ENCODE measurements at regions of chr15 and their contacts with region 1.

Region 1: DNA sequence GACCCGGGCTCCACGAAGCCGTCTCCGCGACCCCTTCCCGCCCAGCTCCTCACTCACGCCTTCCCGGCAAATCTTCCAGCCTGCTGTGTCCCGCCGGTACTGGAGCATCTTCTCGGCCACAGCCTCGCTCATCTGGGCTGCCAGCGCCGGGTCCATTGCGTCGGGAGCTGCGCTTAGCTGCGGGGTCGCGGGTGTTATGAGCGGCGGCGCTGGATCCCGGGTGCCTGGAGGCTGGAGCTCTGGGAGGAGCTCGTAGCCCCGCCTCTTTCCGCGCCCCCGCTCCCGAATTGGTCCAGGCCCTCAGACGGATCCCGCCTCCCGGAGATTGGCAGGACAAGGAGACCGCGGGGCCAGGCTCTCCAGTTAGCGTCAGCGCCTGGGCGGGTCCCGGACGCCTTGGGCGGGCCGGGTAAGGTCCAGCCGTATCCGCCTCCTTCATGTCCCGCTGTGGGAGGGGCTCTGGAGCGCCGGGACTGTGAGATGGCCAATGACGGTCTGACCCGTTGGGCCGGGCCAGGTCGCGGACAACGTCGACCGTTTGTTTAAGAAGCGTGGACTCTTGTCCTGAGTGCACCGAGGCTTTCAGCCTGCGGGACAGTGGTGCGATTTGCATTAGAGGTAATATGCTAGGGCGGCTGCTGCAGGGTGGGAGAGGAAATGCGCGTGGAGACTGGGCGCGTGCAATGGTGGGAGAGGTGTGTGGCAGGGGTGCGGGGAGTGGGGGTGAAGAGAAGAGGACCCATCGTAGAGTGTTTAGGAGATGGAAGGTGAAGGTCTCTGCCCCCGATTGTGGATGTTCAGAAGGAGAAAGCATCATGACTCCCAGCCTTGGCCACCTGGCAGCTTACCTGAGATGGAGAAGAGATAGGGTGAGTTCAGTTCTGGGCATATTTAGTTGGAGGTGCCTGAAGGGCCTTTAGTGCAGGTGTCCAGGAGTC is at the start of gene STARD5:
- DNase-seq: peak; percentile 97
- H3K4me3 ChIP-seq: peak within 1 kb of the TSS; percentile 97 to 99 (median 97)
- H3K27ac ChIP-seq: peak within 1 kb of the TSS; percentile 88
- H3K4me1 ChIP-seq: peaks cover 14% of the 10 kb centered on the region
- H3K27me3 ChIP-seq: no peaks in the 10 kb centered on the region
- CTCF ChIP-seq: no peak
- total RNA-seq, gene STARD5: 10.2 to 19.1 TPM

Region 2: DNA sequence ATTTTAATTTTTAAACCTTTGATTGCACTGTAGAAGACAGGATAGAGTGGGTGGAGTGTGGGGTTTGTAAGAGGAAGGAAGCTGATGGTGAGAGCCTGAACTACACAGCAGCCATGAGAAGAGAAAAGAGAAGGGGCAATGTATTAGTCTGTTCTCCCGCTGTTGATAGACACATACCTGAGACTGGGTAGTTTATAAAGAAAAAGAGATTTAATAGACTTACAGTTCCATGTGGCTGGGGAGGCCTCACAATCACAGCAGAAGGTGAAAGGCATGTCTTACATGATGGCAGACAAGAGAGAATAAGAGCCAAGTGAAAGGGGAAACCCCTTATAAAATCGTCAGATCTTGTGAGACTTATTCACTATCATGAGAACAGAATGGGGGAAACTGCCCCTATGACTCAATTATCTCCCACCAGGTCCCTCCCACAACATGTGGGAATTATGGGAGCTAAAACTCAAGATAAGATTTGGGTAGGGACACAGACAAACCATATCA is 37.5 kb before region 1 on chr15:
- CTCF ChIA-PET with region 1: no interaction called
- dilution Hi-C with region 1: no loop called
- in situ Hi-C with region 1: no loop called
- intact Hi-C with region 1: loop called (anchors 5 kb)
- DNase-seq: no peak
- H3K4me3 ChIP-seq: no peak overlapping the region
- H3K27ac ChIP-seq: no peak overlapping the region
- H3K4me1 ChIP-seq: no peaks in the 10 kb centered on the region
- H3K27me3 ChIP-seq: no peaks in the 10 kb centered on the region
- CTCF ChIP-seq: no peak

Region 3: DNA sequence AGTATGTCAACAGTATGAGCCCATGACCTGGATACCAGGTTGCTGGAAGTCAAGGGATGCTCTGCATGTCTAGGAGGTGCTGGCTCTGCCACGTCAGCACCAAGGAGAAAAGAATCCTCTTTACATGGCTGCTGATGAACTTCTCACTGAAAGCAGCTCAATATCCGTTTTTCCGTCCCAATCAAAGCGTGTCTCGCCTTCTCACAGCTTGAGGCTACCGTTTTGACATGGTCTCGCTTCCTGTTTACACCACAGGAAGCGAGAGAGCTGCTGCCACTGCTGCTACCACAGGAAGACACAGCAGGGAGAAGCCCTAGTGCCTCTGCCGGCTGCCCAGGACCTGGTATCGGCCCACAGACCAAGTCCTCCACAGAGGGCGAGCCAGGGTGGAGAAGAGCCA is 27.5 kb before region 1 on chr15:
- CTCF ChIA-PET with region 1: no interaction called
- dilution Hi-C with region 1: no loop called
- in situ Hi-C with region 1: no loop called
- intact Hi-C with region 1: loop called (anchors 1 kb)
- DNase-seq: no peak
- H3K4me3 ChIP-seq: no peak overlapping the region
- H3K27ac ChIP-seq: no peak overlapping the region
- H3K4me1 ChIP-seq: peaks cover 22% of the 10 kb centered on the region
- H3K27me3 ChIP-seq: no peaks in the 10 kb centered on the region
- CTCF ChIP-seq: no peak

Region 4: DNA sequence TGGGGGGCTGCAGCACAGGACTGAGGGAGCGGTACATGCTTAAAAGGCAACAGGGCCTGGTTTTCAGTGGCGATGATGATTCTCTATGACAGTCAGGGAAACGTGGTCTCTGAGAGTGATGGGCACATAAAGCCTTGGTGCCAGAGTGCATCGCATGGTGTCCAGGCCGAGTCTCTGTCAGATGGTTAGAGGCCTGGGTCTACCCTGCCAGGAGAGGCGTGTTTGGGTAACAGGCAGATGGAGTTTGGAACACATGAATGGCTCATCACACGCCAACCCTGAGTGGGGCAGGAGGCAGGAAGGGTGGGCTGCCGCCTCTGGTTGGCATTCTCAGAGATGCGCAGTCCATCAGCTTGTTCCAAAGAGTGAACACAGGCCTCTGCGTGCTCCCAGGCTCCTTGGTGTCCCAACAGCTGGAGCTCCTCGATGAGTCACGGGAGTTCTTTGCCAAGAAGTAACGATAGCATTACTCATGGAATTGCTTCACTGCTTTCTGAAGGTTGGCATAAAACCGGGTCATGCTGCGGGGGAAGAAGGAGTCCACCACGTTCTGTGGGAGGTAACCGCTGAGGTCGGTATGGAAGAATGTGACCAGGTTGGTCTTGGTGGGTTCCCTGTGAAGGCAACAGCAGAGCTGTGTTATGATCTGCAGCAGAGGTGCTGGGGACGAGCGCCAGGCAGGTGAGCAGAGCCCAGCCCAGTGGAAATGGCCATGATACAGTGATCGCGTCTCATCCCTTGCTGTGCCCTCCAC is 11.2 kb before region 1 on chr15:
- CTCF ChIA-PET with region 1: no interaction called
- dilution Hi-C with region 1: no loop called
- in situ Hi-C with region 1: no loop called
- intact Hi-C with region 1: loop called (anchors 1 kb)
- DNase-seq: peak; percentile 99
- H3K4me3 ChIP-seq: no peak overlapping the region
- H3K27ac ChIP-seq: peak overlapping the region; percentile 57
- H3K4me1 ChIP-seq: peaks cover 20% of the 10 kb centered on the region
- H3K27me3 ChIP-seq: no peaks in the 10 kb centered on the region
- CTCF ChIP-seq: no peak

Region 5: DNA sequence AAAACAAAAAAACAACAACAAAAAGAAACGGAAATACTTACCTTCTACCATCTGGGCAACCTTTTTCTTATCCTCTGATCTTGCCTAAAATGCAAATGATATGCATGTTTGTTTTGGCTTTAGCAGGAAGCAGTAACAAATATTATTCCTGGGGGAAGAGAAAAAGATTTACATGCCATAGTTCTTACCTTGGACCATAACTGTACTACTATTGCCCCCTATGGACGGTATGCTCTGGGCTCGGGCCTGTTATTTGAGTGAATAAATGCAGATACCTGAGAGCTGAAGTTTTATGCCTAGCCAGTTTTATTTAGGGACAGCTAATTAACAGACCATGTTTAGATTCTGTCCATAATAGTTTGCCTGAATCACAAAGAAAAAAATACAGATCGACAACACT is 12.4 kb after region 1 on chr15:
- CTCF ChIA-PET with region 1: no interaction called
- dilution Hi-C with region 1: no loop called
- in situ Hi-C with region 1: no loop called
- intact Hi-C with region 1: loop called (anchors 1 kb)
- DNase-seq: peak; percentile 32
- H3K4me3 ChIP-seq: no peak overlapping the region
- H3K27ac ChIP-seq: no peak overlapping the region
- H3K4me1 ChIP-seq: peaks cover 18% of the 10 kb centered on the region
- H3K27me3 ChIP-seq: no peaks in the 10 kb centered on the region
- CTCF ChIP-seq: peak; percentile 39 to 47

Region 6: GRCh38 chr15:81357223-81357622 is 33.0 kb after region 1 on chr15:
- CTCF ChIA-PET with region 1: no interaction called
- dilution Hi-C with region 1: no loop called
- in situ Hi-C with region 1: no loop called
- intact Hi-C with region 1: no loop called
- DNase-seq: no peak
- H3K4me3 ChIP-seq: no peak overlapping the region
- H3K27ac ChIP-seq: no peak overlapping the region
- H3K4me1 ChIP-seq: no peaks in the 10 kb centered on the region
- H3K27me3 ChIP-seq: peaks cover 5% of the 10 kb centered on the region
- CTCF ChIP-seq: no peak

Region 7: GRCh38 chr15:81394603-81395002 is 70.4 kb after region 1 on chr15:
- CTCF ChIA-PET with region 1: no interaction called
- dilution Hi-C with region 1: no loop called
- in situ Hi-C with region 1: no loop called
- intact Hi-C with region 1: loop called (anchors 2 kb)
- DNase-seq: peak; percentile 67
- H3K4me3 ChIP-seq: no peak overlapping the region
- H3K27ac ChIP-seq: no peak overlapping the region
- H3K4me1 ChIP-seq: peaks cover 5% of the 10 kb centered on the region
- H3K27me3 ChIP-seq: no peaks in the 10 kb centered on the region
- CTCF ChIP-seq: no peak

Region 8: GRCh38 chr15:81573098-81573746 is 249.0 kb after region 1 on chr15:
- CTCF ChIA-PET with region 1: no interaction called
- dilution Hi-C with region 1: no loop called
- in situ Hi-C with region 1: no loop called
- intact Hi-C with region 1: no loop called
- DNase-seq: no peak
- H3K4me3 ChIP-seq: no peak overlapping the region
- H3K27ac ChIP-seq: no peak overlapping the region
- H3K4me1 ChIP-seq: no peaks in the 10 kb centered on the region
- H3K27me3 ChIP-seq: no peaks in the 10 kb centered on the region
- CTCF ChIP-seq: no peak